Heart right ventricle (tissue), 16 donors: ENCODE measurements at regions of chr3 and their contacts with region 1.

Region 1: DNA sequence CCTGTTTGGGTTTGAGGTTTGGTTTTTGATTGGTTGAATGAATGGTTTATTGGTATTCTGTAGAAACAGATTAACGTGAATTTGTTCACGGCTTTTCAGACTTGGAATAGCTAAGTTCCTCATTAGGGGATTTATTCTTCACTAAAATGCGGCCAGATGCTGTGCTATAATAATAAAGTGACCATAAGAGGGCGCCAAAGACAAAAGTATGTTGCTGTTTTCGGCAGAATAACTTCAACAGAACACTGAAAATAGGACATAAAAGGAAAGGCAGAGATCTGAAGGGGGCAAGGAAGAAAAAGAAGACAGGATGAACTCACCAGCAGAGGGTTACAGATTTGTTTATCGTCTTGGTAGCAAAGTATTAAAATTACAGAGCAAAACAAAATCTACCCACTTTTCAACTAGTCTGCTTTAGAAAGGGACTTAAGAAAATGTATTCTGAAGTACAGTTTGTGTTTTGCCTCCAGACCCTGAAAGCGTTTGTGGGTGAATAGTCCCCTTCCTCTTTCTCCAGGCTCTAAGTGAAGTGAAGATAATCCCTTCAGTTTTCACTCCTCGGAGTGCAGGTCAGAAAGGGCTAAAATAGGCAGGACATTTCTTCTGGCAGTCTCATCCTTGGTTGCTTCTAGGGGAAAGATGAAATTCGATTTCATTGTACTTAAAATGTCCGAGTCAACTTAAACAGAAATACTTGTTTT is 147.6 kb downstream of the IL20RB start:
- DNase-seq: peak in 1 of 2 donors; percentile 20
- ATAC-seq: peak in 6 of 8 donors; percentile 52 to 75 (median 66)
- H3K4me3 ChIP-seq: no peak overlapping the region
- H3K27ac ChIP-seq: peak overlapping the region in 1 of 10 donors; percentile 15
- H3K4me1 ChIP-seq: peaks cover 0 to 6% (median 0%) of the 10 kb centered on the region in 9 donors
- H3K27me3 ChIP-seq: peaks cover 0 to 51% (median 34%) of the 10 kb centered on the region in 7 donors
- CTCF ChIP-seq: peak; percentile 21 to 77 (median 68)

Region 2: GRCh38 chr3:137032465-137033120 is 72.8 kb before region 1 on chr3:
- intact Hi-C with region 1: loop called in 1 of 10 experiments (anchors 5 kb)
- DNase-seq: peak; percentile 86 to 90
- ATAC-seq: peak; percentile 86 to 94 (median 89)
- H3K4me3 ChIP-seq: peak overlapping the region in 8 of 10 donors; percentile 18 to 50 (median 44)
- H3K27ac ChIP-seq: no peak overlapping the region
- H3K4me1 ChIP-seq: peaks cover 0 to 10% (median 6%) of the 10 kb centered on the region in 9 donors
- H3K27me3 ChIP-seq: peaks cover 0 to 27% (median 7%) of the 10 kb centered on the region in 7 donors
- CTCF ChIP-seq: peak; percentile 90 to 99 (median 98)

Region 3: GRCh38 chr3:137148917-137149316 is 43.5 kb after region 1 on chr3:
- intact Hi-C with region 1: no loop called
- DNase-seq: no peak
- ATAC-seq: no peak
- H3K4me3 ChIP-seq: no peak overlapping the region
- H3K27ac ChIP-seq: no peak overlapping the region
- H3K4me1 ChIP-seq: no peaks in the 10 kb centered on the region
- H3K27me3 ChIP-seq: peaks cover 0 to 4% (median 0%) of the 10 kb centered on the region in 7 donors
- CTCF ChIP-seq: no peak

Region 4: DNA sequence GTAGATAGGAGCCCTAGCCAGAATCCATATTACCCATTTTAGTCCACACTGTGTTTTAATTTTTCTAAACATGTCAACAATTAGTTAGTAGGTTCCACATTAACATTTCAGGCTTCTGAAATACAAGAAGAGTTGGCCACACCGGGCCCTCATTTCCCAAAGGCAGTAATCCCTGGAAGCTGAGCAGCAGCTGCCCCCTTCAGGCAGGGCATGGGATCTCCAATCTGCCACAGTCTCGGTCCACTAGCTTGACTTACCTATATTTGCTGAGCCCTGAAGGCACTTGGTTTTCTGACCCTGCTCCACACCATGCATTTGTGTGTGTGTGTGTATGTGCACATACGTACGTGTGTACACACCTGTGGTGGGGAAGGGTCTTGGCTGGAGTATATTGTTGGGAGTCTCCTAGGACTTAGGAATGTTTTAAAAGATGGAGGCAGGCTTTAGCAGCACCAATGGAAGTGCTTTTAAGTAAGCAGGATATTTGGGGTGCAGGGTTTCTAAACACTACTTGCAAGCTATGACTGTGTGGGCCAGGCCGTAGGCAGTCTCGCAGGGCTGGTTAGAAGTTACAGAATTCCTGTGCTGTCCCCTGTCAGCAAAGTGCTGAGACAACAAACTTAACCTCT is 587.5 kb after region 1 on chr3:
- intact Hi-C with region 1: loop called in 3 of 10 experiments (anchors 10 kb)
- DNase-seq: no peak
- ATAC-seq: no peak
- H3K4me3 ChIP-seq: no peak overlapping the region
- H3K27ac ChIP-seq: no peak overlapping the region
- H3K4me1 ChIP-seq: no peaks in the 10 kb centered on the region
- H3K27me3 ChIP-seq: peaks cover 0 to 14% (median 0%) of the 10 kb centered on the region in 7 donors
- CTCF ChIP-seq: peak in 7 of 9 donors; percentile 28 to 60 (median 44)

Region 5: GRCh38 chr3:137946345-137946973 is 841.0 kb after region 1 on chr3:
- intact Hi-C with region 1: loop called in 9 of 10 experiments (anchors 2 to 10 kb)
- DNase-seq: peak; percentile 23 to 25
- ATAC-seq: peak in 1 of 8 donors; percentile 42
- H3K4me3 ChIP-seq: no peak overlapping the region
- H3K27ac ChIP-seq: no peak overlapping the region
- H3K4me1 ChIP-seq: no peaks in the 10 kb centered on the region
- H3K27me3 ChIP-seq: no peaks in the 10 kb centered on the region
- CTCF ChIP-seq: peak; percentile 41 to 72 (median 64)

Region 6: GRCh38 chr3:137970914-137971831 is 865.7 kb after region 1 on chr3:
- intact Hi-C with region 1: loop called in 6 of 10 experiments (anchors 2 to 10 kb)
- DNase-seq: peak; percentile 59 to 73
- ATAC-seq: peak; percentile 63 to 92 (median 81)
- H3K4me3 ChIP-seq: no peak overlapping the region
- H3K27ac ChIP-seq: no peak overlapping the region
- H3K4me1 ChIP-seq: no peaks in the 10 kb centered on the region
- H3K27me3 ChIP-seq: peaks cover 0 to 14% (median 0%) of the 10 kb centered on the region in 7 donors
- CTCF ChIP-seq: peak; percentile 64 to 89 (median 82)

Region 7: GRCh38 chr3:138051946-138052802 is 946.7 kb after region 1 on chr3:
- intact Hi-C with region 1: loop called in 4 of 10 experiments (anchors 5 to 10 kb)
- DNase-seq: peak; percentile 24 to 48
- ATAC-seq: peak in 7 of 8 donors; percentile 70 to 76 (median 73)
- H3K4me3 ChIP-seq: no peak overlapping the region
- H3K27ac ChIP-seq: no peak overlapping the region
- H3K4me1 ChIP-seq: peaks cover 0 to 26% (median 0%) of the 10 kb centered on the region in 9 donors
- H3K27me3 ChIP-seq: no peaks in the 10 kb centered on the region
- CTCF ChIP-seq: peak; percentile 32 to 69 (median 60)

Region 8: GRCh38 chr3:138509586-138509985 is 1404.2 kb after region 1 on chr3:
- intact Hi-C with region 1: no loop called
- DNase-seq: no peak
- ATAC-seq: no peak
- H3K4me3 ChIP-seq: no peak overlapping the region
- H3K27ac ChIP-seq: no peak overlapping the region
- H3K4me1 ChIP-seq: peaks cover 0 to 16% (median 0%) of the 10 kb centered on the region in 9 donors
- H3K27me3 ChIP-seq: no peaks in the 10 kb centered on the region
- CTCF ChIP-seq: no peak